ENCODE measurements at regions of chr12 and their contacts with region 1.

Region 1: GRCh38 chr12:95820102-95820703 is 29.6 kb upstream of the NTN4 start:
- DNase-seq: no peak
- H3K4me3 Mint-ChIP-seq: no peak overlapping the region
- H3K27ac Mint-ChIP-seq: no peak overlapping the region
- H3K4me1 Mint-ChIP-seq: no peaks in the 10 kb centered on the region
- H3K27me3 Mint-ChIP-seq: peaks cover 15% of the 10 kb centered on the region

Region 2: GRCh38 chr12:95551305-95551704 is 268.9 kb before region 1 on chr12 and contains the start of gene USP44:
- CTCF ChIA-PET with region 1: no interaction called
- POLR2A ChIA-PET with region 1: no interaction called
- intact Hi-C with region 1: no loop called
- DNase-seq: peak; percentile 11
- H3K4me3 Mint-ChIP-seq: peak within 1 kb of the TSS; percentile 54
- H3K27ac Mint-ChIP-seq: peak within 1 kb of the TSS; percentile 74
- H3K4me1 Mint-ChIP-seq: peaks cover 29% of the 10 kb centered on the region
- H3K27me3 Mint-ChIP-seq: peaks cover 20% of the 10 kb centered on the region
- total RNA-seq, gene USP44: 2.8 to 2.9 TPM

Region 3: DNA sequence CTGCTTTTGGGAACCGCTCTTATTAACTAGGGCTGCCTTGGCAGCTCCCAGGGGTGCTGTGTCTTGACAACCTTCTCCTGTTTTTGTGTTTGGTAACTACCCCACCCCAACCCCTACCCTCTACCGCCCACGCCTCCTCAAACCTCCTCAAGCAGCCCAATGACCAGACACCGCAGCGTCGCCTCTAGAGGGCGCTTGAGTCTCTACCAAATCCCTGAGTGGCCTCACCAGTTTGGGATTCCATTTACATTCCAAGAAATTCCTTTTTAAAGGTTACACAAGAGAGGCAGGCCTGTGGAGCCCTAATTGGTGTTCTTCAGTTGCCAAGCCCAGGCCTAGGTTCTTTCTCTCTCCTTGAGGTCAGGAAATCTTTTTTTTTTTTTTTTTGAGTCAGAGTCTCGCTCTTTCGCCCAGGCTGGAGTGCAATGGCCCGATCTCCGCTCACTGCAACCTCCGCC is 196.6 kb before region 1 on chr12:
- CTCF ChIA-PET with region 1: no interaction called
- POLR2A ChIA-PET with region 1: no interaction called
- intact Hi-C with region 1: loop called (anchors 1 kb)
- DNase-seq: peak; percentile 43
- H3K4me3 Mint-ChIP-seq: no peak overlapping the region
- H3K27ac Mint-ChIP-seq: no peak overlapping the region
- H3K4me1 Mint-ChIP-seq: no peaks in the 10 kb centered on the region
- H3K27me3 Mint-ChIP-seq: peaks cover 8% of the 10 kb centered on the region

Region 4: DNA sequence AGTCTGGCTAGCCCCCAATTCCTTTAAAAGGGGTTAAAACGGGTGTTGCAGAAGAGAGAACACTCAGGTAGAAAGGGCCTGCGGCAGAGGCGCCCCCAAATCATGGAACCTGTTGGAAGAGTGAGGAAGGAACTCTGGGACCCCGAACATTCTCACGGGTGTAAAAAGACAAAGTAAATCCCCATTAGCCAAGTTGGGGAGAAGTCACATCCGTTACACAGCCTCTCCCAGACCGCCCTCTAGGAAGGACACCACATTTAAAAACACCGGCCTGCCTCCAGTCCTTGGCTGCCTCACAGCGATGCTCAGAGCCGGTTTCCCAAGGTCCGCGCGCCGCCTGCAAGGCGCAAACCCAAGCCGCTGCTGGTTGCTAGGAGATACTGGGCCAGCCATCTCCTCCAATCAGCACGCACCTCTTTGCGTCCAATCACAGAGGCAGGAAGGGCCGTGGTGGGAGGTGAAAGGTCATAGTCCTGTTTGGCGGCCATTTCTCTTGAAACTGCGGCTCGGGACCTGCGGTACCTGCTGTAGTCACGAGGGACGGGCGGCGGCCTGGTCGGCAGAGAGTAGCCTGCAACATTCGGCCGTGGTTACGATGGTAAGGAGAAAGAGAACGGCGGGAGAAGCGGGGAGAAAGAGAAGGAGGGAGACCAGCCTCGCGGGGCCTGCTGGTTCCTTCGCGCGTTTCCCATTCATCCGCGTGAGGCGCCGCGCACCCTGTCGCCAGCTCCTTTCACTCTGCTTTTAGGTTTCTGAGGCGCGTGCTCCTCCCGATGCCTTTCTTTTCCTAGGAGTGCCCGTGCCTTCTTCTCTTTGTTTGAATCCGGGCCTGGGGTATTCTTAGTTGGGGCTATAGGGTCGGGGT is 38.5 kb after region 1 on chr12 and contains the start of gene SNRPF:
- CTCF ChIA-PET with region 1: no interaction called
- POLR2A ChIA-PET with region 1: no interaction called
- intact Hi-C with region 1: no loop called
- DNase-seq: peak; percentile 97
- H3K4me3 Mint-ChIP-seq: no peak within 1 kb of the TSS
- H3K27ac Mint-ChIP-seq: no peak within 1 kb of the TSS
- H3K4me1 Mint-ChIP-seq: peaks cover 38% of the 10 kb centered on the region
- H3K27me3 Mint-ChIP-seq: peaks cover 5% of the 10 kb centered on the region
- total RNA-seq, gene SNRPF: 45.4 to 46.0 TPM

Measured in activated CD4-positive, alpha-beta memory T cell treated with anti-CD3 and anti-CD28 coated beads for 36 hours (primary cell).